Activated T-helper 1 cell treated with anti-CD3 and anti-CD28 coated beads, Interleukin-12 subunit alpha, Interleukin-12 subunit beta, Interleukin-2, Interleukin-4 antibody, amounts not matched to agents 30 ng/mL and 10 ng/mL and 1 ng/mL, durations not matched to agents 14 hours and 24 hours and 36 hours (primary cell): ENCODE measurements at regions of chr20 and their contacts with region 1.

Region 1: DNA sequence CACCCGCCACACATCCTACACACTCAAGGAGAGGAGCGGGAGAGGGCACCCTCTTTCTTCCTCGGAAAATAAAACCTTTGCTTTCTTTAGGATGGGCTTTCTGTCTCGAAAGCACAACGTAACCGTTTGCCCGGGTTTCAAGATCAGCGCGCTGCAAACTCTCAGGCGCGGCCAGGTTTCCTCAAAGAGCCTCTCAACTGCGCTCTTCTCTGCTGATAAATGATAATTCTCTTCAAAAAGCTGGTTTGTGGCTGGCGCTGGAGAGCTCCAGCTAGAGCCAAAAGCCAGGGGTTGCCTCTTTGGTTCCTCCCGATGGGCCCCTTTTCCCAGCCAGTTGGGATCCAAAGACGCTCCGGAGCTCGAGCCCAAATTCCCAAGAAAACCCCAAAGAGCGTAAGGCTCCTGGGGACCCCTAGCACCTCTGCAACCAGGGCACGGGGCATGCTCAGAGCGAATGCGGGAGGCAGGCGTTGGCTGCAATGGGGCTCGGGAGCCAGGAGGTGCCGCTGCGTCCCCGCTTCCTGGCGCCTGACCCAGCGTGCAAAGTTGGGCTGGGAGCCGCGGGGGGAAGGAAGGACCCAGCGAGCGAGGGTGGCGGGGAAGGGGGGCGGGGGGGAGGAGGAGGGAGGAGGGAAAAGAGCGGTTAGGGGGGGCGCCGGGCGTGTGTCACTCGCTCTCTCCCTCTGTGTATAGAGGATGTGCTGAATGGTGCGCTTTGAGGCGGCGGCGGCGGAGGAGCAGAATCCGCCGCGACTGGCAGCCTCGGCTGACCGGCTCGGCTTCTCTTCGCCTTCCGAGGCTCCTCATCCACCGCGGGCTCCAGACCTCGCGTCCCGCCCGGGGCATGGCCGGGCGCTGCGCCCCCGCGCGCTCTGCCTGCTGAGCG is at the start of gene PLCB1:
- DNase-seq: peak; percentile 59
- H3K4me3 Mint-ChIP-seq: peak within 1 kb of the TSS; percentile 75
- H3K27ac Mint-ChIP-seq: no peak within 1 kb of the TSS
- H3K4me1 Mint-ChIP-seq: peaks cover 5% of the 10 kb centered on the region
- H3K27me3 Mint-ChIP-seq: peaks cover 31% of the 10 kb centered on the region
- total RNA-seq, gene PLCB1: 3.2 and 5.3 TPM in 2 replicates

Region 2: GRCh38 chr20:8043687-8044282 is 88.1 kb before region 1 on chr20:
- intact Hi-C with region 1: loop called (anchors 5 kb)
- DNase-seq: no peak
- H3K4me3 Mint-ChIP-seq: no peak overlapping the region
- H3K27ac Mint-ChIP-seq: no peak overlapping the region
- H3K4me1 Mint-ChIP-seq: no peaks in the 10 kb centered on the region
- H3K27me3 Mint-ChIP-seq: peaks cover 11% of the 10 kb centered on the region

Region 3: DNA sequence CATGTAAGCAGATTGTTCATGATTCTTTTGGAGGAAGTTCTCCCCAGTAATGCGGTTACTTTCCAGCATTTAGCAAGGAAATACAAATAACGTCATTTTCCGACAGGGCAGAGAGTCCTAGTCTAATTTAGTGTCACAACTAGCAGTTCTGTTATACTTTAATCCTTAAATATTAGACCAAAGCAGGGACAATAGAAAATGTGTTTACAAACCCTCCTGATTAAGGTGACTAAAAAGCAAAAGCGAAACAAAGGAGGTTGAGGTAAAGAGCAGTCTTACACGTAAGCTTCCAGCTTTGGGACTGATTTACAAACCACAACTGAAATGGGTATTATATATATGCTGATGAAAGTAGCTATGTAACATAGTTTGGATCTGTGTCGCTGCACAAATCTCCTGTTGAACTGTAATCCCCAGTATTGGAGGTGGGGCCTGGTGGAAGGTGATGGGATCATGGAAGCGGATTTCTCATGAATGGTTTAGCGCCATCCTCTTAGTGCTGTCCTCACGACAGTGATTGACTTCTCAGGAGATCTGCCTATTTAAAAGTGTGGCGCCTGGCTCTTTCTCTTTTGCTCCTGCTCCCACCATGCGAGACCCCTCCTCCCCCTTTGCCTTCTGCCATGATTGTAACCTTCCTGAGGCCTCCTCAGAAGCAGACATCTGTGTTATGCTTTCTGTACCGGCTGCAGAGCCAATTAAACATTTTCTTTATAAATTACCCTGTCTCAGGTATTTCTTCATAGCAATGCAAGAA is 82.2 kb after region 1 on chr20:
- intact Hi-C with region 1: loop called (anchors 1 kb)
- DNase-seq: peak; percentile 4
- H3K4me3 Mint-ChIP-seq: peak overlapping the region; percentile 78
- H3K27ac Mint-ChIP-seq: peak overlapping the region; percentile 78
- H3K4me1 Mint-ChIP-seq: peaks cover 75% of the 10 kb centered on the region
- H3K27me3 Mint-ChIP-seq: peaks cover 2% of the 10 kb centered on the region

Region 4: DNA sequence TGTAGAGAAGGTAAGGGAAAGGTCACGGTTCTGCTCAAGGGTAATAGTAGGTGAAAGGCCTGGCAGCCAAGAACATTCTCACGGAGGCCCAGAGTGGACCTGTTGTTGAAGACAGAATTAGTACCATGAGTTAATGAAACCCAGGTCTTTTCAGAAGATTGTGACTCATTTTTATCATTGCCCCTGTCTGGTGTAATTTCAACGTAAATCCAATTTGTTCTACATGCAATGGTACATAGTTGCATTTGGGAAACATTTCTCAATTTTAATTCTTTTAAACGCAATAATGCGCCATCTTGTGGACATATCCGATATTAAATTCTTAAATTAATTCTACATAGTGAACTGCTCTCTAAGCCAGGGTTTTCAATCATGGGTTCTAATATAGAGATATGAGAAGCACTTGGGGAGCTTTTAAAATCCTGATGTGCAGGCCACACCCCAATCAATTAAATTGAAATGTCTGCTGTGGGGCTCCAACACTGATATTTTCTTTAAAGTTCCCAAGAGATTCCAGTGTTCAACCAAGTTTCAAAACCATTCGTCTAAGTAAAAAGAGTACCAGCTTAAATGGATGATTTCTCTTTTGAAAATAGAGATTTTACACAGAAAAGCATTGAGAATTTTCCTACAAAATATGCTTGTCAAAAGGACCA is 257.7 kb after region 1 on chr20:
- intact Hi-C with region 1: loop called (anchors 1 kb)
- DNase-seq: no peak
- H3K4me3 Mint-ChIP-seq: no peak overlapping the region
- H3K27ac Mint-ChIP-seq: no peak overlapping the region
- H3K4me1 Mint-ChIP-seq: peaks cover 7% of the 10 kb centered on the region
- H3K27me3 Mint-ChIP-seq: peaks cover under 1% of the 10 kb centered on the region

Region 5: DNA sequence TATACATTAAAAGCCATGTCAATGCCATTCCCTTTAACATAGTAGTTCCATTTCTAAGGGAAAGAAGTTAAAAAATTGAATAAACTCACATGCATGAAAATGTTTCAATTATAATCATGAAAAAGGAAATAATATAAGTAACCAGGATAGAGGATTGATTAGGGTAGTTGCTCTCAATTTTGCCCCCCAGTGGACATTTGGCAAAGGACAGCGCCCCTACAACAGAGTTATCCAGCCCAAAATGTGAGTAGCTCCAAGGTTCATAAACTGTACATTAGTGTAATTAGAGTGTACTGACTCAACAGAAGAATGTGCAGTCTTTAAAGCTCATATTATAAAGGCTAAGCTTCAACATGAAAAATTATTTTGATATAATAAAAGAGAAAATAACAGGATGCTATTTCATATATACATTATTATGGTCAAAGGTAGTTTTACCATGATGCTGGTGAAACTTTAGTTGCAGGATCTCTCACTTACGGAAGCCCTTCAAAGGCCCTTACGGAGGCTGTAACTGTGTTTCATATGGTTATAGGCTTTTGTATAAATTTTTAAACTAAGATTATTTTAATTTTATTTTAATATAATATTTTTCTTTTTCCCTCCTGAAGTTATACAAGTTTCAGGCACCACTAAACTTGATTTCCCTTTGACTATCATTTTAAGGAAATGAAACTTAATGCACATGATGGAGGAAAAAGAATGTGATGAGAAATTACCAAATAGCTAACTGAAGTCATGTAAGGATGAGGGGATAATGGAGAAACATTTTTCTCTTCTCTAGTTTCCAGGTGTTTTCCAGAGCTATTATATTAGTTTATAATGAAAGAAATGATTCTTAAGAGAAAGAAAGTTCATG is 403.8 kb after region 1 on chr20:
- intact Hi-C with region 1: loop called (anchors 5 kb)
- DNase-seq: no peak
- H3K4me3 Mint-ChIP-seq: no peak overlapping the region
- H3K27ac Mint-ChIP-seq: no peak overlapping the region
- H3K4me1 Mint-ChIP-seq: no peaks in the 10 kb centered on the region
- H3K27me3 Mint-ChIP-seq: no peaks in the 10 kb centered on the region

Region 6: DNA sequence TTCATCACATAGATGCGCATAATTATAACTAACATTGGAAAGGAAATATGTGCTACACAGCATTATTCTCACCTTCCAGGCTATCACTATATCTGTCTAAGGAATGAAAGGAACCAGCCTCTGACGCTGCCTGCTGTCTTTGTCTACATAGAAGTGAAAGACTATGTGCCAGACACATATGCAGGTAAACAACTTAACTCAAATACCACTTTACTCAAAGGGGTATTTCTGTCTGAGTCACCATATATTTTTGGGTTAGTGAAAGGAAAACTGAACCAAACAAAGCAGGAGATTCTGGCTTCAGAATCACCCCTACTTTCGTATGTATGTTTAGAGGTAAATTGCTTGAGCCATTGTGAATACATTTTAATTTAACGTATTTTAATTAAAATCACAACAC is 608.4 kb after region 1 on chr20:
- intact Hi-C with region 1: loop called (anchors 5 kb)
- DNase-seq: no peak
- H3K4me3 Mint-ChIP-seq: no peak overlapping the region
- H3K27ac Mint-ChIP-seq: no peak overlapping the region
- H3K4me1 Mint-ChIP-seq: no peaks in the 10 kb centered on the region
- H3K27me3 Mint-ChIP-seq: no peaks in the 10 kb centered on the region